Tibial artery (tissue), 4 donors: ENCODE measurements at regions of chrX and their contacts with region 1.

Region 1: GRCh38 chrX:34300871-34301270 is 168.8 kb upstream of the FAM47A start:
- DNase-seq: no peak
- H3K4me3 ChIP-seq: no peak overlapping the region
- H3K27ac ChIP-seq: no peak overlapping the region
- H3K4me1 ChIP-seq: no peaks in the 10 kb centered on the region
- H3K27me3 ChIP-seq: no peaks in the 10 kb centered on the region
- CTCF ChIP-seq: peak; percentile 40 to 51

Region 2: GRCh38 chrX:33434256-33435092 is 866.4 kb before region 1 on chrX:
- intact Hi-C with region 1: loop called (anchors 10 kb)
- DNase-seq: peak; percentile 25 to 64
- H3K4me3 ChIP-seq: peak overlapping the region; percentile 16
- H3K27ac ChIP-seq: no peak overlapping the region
- H3K4me1 ChIP-seq: no peaks in the 10 kb centered on the region
- H3K27me3 ChIP-seq: no peaks in the 10 kb centered on the region
- CTCF ChIP-seq: peak; percentile 67 to 69

Region 3: DNA sequence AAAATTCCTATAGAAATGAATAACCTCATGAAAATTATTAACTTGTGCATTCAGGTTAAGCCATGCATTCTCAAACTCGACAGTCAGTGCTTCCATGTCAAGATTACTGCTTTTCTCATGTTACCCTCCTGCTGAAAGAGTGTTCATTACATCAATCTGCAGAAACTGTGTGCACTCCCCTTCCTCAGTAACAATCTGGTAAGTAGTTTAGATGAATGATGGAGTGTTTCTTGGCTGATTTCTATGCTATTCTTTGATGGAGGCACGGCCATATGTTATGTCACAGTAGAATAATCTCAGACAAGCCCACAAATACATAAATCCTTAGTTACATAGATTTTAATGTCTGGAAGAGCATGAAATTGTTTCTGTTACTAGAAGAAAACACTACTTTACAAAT is 24.6 kb after region 1 on chrX:
- intact Hi-C with region 1: loop called (anchors 2 kb)
- DNase-seq: no peak
- H3K4me3 ChIP-seq: no peak overlapping the region
- H3K27ac ChIP-seq: no peak overlapping the region
- H3K4me1 ChIP-seq: no peaks in the 10 kb centered on the region
- H3K27me3 ChIP-seq: no peaks in the 10 kb centered on the region
- CTCF ChIP-seq: no peak

Region 4: GRCh38 chrX:34503119-34503518 is 202.2 kb after region 1 on chrX:
- intact Hi-C with region 1: no loop called
- DNase-seq: no peak
- H3K4me3 ChIP-seq: no peak overlapping the region
- H3K27ac ChIP-seq: no peak overlapping the region
- H3K4me1 ChIP-seq: no peaks in the 10 kb centered on the region
- H3K27me3 ChIP-seq: no peaks in the 10 kb centered on the region
- CTCF ChIP-seq: no peak